Heart right ventricle (tissue), 16 donors: ENCODE measurements at regions of chr4 and their contacts with region 1.

Region 1: GRCh38 chr4:99205153-99205979 is 13.7 kb downstream of the ADH6 start:
- DNase-seq: no peak
- ATAC-seq: peak in 4 of 8 donors; percentile 37 to 80 (median 48)
- H3K4me3 ChIP-seq: no peak overlapping the region
- H3K27ac ChIP-seq: no peak overlapping the region
- H3K4me1 ChIP-seq: peaks cover 0 to 19% (median 0%) of the 10 kb centered on the region in 9 donors
- H3K27me3 ChIP-seq: no peaks in the 10 kb centered on the region
- CTCF ChIP-seq: no peak

Region 2: GRCh38 chr4:99234331-99235010 is 29.1 kb after region 1 on chr4:
- intact Hi-C with region 1: no loop called
- DNase-seq: no peak
- ATAC-seq: no peak
- H3K4me3 ChIP-seq: no peak overlapping the region
- H3K27ac ChIP-seq: no peak overlapping the region
- H3K4me1 ChIP-seq: no peaks in the 10 kb centered on the region
- H3K27me3 ChIP-seq: no peaks in the 10 kb centered on the region
- CTCF ChIP-seq: no peak

Region 3: DNA sequence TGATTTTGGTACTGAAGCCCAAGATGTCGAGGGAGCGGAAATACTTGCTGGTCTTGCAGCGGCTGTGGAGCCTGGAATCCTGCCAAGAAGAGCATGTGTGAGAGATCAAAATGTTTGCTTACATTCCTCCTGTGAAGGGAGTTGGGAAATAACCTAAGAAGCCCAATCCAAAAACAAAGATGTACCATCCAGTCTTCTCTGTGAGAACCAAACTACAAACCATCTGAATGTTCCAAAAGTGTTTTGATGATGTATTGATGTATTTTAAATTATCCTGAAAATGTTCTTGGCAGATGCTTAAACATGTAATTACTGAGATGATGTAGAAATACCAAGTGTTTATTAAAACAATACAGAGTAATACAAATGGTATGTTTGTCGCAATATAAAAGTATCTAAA is 95.6 kb after region 1 on chr4:
- intact Hi-C with region 1: loop called in 1 of 10 experiments (anchors 10 kb)
- DNase-seq: peak; percentile 60 to 85
- ATAC-seq: peak; percentile 55 to 93 (median 90)
- H3K4me3 ChIP-seq: no peak overlapping the region
- H3K27ac ChIP-seq: peak overlapping the region in 8 of 10 donors; percentile 0 to 61 (median 46)
- H3K4me1 ChIP-seq: peaks cover 0 to 16% (median 0%) of the 10 kb centered on the region in 9 donors
- H3K27me3 ChIP-seq: no peaks in the 10 kb centered on the region
- CTCF ChIP-seq: no peak

Region 4: GRCh38 chr4:99324979-99325378 is 119.6 kb after region 1 on chr4:
- intact Hi-C with region 1: loop called in 1 of 10 experiments (anchors 10 kb)
- DNase-seq: peak; percentile 33 to 63
- ATAC-seq: peak; percentile 62 to 88 (median 84)
- H3K4me3 ChIP-seq: no peak overlapping the region
- H3K27ac ChIP-seq: peak overlapping the region in 7 of 10 donors; percentile 10 to 69 (median 56)
- H3K4me1 ChIP-seq: peaks cover 0 to 25% (median 17%) of the 10 kb centered on the region in 9 donors
- H3K27me3 ChIP-seq: no peaks in the 10 kb centered on the region
- CTCF ChIP-seq: no peak